ENCODE measurements at regions of chr19 and their contacts with region 1.

Region 1: GRCh38 chr19:12527034-12527836 is 24.0 kb downstream of the ZNF564 start:
- DNase-seq: peak in 1 of 14 experiments; percentile 9
- ATAC-seq: no peak
- H3K4me3 ChIP-seq: no peak overlapping the region
- H3K4me3 Mint-ChIP-seq: no peak overlapping the region
- H3K27ac ChIP-seq: no peak overlapping the region
- H3K27ac Mint-ChIP-seq: peak overlapping the region; percentile 24
- H3K4me1 ChIP-seq: no peaks in the 10 kb centered on the region
- H3K4me1 Mint-ChIP-seq: peaks cover 5% of the 10 kb centered on the region
- H3K27me3 ChIP-seq: no peaks in the 10 kb centered on the region
- H3K27me3 Mint-ChIP-seq: no peaks in the 10 kb centered on the region
- CTCF ChIP-seq: no peak

Region 2: DNA sequence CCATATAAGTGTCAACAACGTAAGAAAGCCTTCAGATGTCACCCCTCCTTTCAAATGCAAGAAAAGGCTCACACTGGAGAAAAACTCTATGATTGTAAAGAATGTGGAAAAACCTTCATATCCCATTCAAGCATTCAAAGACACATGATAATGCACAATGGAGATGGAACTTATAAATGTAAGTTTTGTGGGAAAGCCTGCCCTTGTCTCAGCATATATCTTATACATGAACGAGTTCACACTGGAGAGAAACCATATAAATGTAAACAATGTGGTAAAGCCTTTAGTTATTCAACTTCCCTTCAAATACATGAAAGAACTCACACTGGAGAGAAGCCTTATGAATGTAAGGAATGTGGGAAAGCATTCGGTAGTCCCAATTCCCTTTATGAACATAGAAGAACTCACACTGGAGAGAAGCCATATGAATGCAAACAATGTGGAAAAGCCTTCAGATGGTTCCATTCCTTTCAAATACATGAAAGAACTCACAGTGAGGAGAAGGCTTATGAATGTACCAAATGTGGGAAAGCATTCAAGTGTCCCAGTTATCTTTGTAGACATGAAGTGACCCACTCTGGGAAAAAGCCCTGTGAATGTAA is 451.6 kb before region 1 on chr19:
- CTCF ChIA-PET with region 1: no interaction called
- POLR2A ChIA-PET with region 1: no interaction called
- intact Hi-C with region 1: loop called in 1 of 2 experiments (anchors 10 kb)
- DNase-seq: no peak
- ATAC-seq: no peak
- H3K4me3 ChIP-seq: no peak overlapping the region
- H3K4me3 Mint-ChIP-seq: no peak overlapping the region
- H3K27ac ChIP-seq: no peak overlapping the region
- H3K27ac Mint-ChIP-seq: no peak overlapping the region
- H3K4me1 ChIP-seq: no peaks in the 10 kb centered on the region
- H3K4me1 Mint-ChIP-seq: no peaks in the 10 kb centered on the region
- H3K27me3 ChIP-seq: no peaks in the 10 kb centered on the region
- H3K27me3 Mint-ChIP-seq: no peaks in the 10 kb centered on the region
- CTCF ChIP-seq: no peak

Region 3: DNA sequence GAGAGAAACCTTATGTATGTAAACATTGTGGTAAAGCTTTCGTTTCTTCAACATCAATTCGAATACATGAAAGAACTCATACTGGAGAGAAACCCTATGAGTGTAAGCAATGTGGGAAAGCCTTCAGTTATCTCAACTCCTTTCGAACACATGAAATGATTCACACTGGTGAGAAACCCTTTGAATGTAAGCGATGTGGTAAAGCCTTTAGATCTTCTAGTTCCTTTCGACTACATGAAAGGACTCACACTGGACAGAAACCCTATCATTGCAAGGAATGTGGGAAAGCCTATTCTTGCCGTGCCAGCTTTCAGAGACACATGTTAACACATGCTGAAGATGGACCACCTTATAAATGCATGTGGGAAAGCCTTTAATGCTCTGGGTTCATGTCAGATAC is 339.6 kb before region 1 on chr19:
- CTCF ChIA-PET with region 1: no interaction called
- POLR2A ChIA-PET with region 1: no interaction called
- intact Hi-C with region 1: loop called in 1 of 2 experiments (anchors 5 kb)
- DNase-seq: no peak
- ATAC-seq: no peak
- H3K4me3 ChIP-seq: no peak overlapping the region
- H3K4me3 Mint-ChIP-seq: no peak overlapping the region
- H3K27ac ChIP-seq: no peak overlapping the region
- H3K27ac Mint-ChIP-seq: no peak overlapping the region
- H3K4me1 ChIP-seq: no peaks in the 10 kb centered on the region
- H3K4me1 Mint-ChIP-seq: no peaks in the 10 kb centered on the region
- H3K27me3 ChIP-seq: no peaks in the 10 kb centered on the region
- H3K27me3 Mint-ChIP-seq: no peaks in the 10 kb centered on the region
- CTCF ChIP-seq: no peak